Ovary (tissue), 10 donors: ENCODE measurements at regions of chr1 and their contacts with region 1.

Region 1: DNA sequence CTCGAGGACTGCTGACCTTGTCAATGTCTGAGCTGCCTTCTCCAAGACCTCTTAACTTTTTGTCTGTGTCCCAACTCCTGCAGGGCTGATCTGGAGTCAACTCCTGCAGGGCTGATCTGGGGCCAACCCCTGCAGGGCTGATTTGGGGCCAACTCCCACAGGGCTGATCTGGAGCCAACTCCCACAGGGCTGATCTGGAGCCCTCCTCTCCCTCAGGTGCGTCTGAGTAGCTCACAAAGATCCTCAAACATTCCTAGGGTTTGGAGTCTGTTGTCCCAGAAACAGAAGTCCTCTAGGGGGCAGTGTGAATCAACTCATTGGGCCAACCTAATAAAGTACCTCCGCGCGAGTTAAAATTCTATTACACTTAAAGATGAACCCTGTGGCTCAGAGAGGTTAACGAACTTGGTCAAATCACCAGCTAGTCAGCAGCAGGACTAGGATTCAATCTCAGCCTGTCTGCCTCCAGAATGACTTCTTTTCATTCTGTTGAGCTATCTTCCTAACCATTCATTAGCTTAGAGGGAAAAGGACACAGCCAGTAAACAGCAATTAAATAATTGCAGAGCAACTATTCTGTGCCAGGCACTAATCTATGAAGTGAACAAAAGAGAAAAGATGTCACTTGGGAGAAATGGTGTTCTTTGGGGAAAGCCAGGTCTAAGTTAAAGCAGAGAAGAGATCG is 17.2 kb upstream of the RLF start:
- DNase-seq: peak in 4 of 5 donors; percentile 12 to 60 (median 34)
- H3K4me3 ChIP-seq: no peak overlapping the region
- H3K27ac ChIP-seq: no peak overlapping the region
- H3K4me1 ChIP-seq: peaks cover 3% of the 10 kb centered on the region
- H3K27me3 ChIP-seq: no peaks in the 10 kb centered on the region
- CTCF ChIP-seq: peak; percentile 53 to 64 (median 58)
- EP300 ChIP-seq: no peak
- POLR2A ChIP-seq: no peak

Region 2: DNA sequence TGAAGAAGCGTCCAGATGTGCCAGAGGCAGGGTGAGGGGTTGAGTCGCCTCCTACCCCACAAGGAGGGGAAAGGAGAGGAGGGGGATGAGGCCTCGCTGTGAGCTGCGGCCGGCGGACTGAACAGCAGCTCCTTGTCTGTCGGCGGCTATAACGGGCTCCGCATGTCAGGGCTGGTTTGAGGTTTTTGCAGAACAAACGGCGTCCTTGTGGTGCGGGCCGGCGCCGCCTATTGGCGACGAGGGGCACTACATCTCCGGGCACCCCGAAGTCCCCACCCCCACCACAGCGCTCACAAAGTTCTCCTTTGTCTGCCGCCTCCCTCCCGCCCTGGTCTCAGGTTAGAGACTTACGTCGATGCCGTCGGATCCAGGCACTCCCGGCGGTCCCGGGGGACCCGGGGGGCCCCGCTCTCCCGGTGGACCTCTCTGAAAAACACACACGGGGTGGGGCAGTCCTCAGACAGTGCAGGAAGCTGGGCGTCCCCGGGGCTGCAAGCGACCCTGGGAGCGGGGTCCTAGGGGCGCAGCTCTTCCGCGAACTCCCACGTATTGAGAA is 171.3 kb after region 1 on chr1:
- intact Hi-C with region 1: loop called in 1 of 4 experiments (anchors 10 kb)
- DNase-seq: peak; percentile 58 to 86 (median 74)
- H3K4me3 ChIP-seq: peak overlapping the region; percentile 31
- H3K27ac ChIP-seq: no peak overlapping the region
- H3K4me1 ChIP-seq: peaks cover 6% of the 10 kb centered on the region
- H3K27me3 ChIP-seq: peaks cover 4% of the 10 kb centered on the region
- CTCF ChIP-seq: peak; percentile 67 to 77 (median 74)
- EP300 ChIP-seq: no peak
- POLR2A ChIP-seq: no peak

Region 3: DNA sequence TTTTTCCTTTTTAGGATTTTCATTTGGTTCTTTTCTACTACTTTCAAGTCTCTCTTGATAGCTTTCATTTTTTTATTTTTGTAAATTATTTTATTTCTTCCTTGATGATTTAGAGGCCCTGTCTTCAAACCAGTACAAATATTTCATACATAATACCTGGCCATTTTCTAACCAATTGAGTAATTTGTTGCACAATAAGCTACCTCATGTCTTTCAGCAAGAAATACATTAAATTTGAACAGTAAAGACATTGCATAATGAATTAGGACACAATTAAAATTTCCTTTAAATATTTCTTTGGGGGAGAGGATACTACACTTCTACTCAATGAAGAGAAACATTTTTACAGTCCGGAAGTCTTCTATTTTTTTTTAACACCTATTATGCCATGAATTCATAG is 188.7 kb after region 1 on chr1:
- intact Hi-C with region 1: loop called in 2 of 4 experiments (anchors 5 to 10 kb)
- DNase-seq: no peak
- H3K4me3 ChIP-seq: no peak overlapping the region
- H3K27ac ChIP-seq: no peak overlapping the region
- H3K4me1 ChIP-seq: no peaks in the 10 kb centered on the region
- H3K27me3 ChIP-seq: no peaks in the 10 kb centered on the region
- CTCF ChIP-seq: no peak
- EP300 ChIP-seq: no peak
- POLR2A ChIP-seq: no peak

Region 4: DNA sequence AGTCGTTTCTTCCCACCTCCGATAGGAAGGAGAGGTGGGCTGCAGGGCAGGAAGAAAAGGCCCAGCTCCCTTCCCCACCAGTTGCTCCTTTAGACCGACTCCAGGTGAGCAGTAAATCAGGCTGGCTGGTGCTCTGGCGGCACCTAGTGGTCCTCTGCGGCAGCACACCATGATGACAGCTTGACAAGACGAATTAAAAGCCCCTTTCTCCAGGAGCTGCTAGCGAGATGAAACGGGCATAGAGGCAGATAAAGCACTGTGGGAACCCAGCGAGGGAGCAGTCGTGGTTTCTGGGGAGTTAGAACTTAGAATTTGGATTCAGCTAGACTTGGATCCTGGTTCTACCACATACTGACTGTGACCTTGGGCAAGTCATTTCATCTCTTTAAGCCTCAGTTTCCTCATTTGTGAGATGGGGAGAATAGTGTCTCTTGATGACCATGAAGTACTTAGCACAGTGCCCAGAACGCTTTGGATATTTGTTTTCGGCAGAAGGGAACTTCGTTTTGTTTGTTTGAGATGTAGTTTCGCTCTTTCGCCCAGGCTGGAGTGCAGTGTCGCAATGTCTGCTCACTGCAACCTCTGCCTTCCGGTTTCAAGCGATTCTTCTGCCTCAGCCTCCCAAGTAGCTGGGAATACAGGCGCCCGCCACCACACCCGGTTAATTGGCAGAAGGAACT is 194.9 kb after region 1 on chr1:
- intact Hi-C with region 1: loop called in 1 of 4 experiments (anchors 10 kb)
- DNase-seq: peak; percentile 44 to 82 (median 71)
- H3K4me3 ChIP-seq: no peak overlapping the region
- H3K27ac ChIP-seq: no peak overlapping the region
- H3K4me1 ChIP-seq: no peaks in the 10 kb centered on the region
- H3K27me3 ChIP-seq: no peaks in the 10 kb centered on the region
- CTCF ChIP-seq: peak; percentile 78 to 97 (median 78)
- EP300 ChIP-seq: no peak
- POLR2A ChIP-seq: no peak